Right ventricle myocardium inferior (tissue), 1 donor: ENCODE measurements at regions of chr14 and their contacts with region 1.

Region 1: DNA sequence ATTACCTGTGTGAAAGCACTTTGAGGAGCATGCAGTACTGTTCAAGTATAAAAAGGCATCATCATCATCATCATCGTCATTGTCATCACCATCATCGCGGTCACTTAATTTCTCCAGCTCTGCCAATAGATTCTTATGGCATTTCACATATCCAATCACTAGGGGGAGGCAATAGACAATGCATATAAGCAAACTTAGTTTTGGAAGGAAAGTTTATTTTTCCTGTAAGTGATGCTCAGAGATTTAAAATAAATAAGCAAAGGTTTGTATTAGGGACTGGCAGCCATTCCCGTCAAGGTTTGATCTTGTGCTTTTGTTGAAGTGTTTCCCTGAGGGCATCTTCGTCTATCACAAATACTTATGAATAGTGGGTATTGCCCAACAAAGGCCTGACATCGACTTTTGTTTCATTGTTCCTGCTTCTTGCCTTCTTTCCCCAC is 127.4 kb downstream of the KTN1 start:
- DNase-seq: no peak
- ATAC-seq: peak; percentile 38

Region 2: GRCh38 chr14:55762595-55763232 is 55.3 kb after region 1 on chr14:
- intact Hi-C with region 1: no loop called
- DNase-seq: no peak
- ATAC-seq: no peak

Region 3: GRCh38 chr14:56339855-56340701 is 632.7 kb after region 1 on chr14:
- intact Hi-C with region 1: loop called (anchors 5 kb)
- DNase-seq: peak; percentile 88
- ATAC-seq: peak; percentile 95

Region 4: GRCh38 chr14:56422703-56423213 is 715.4 kb after region 1 on chr14:
- intact Hi-C with region 1: loop called (anchors 5 kb)
- DNase-seq: no peak
- ATAC-seq: peak; percentile 87

Region 5: GRCh38 chr14:56474419-56475022 is 767.1 kb after region 1 on chr14:
- intact Hi-C with region 1: loop called (anchors 5 kb)
- DNase-seq: no peak
- ATAC-seq: no peak